ENCODE measurements at regions of chr7 and their contacts with region 1.

Region 1: GRCh38 chr7:16114633-16115032 is 306.7 kb downstream of the CRPPA start:
- DNase-seq: peak in 1 of 2 experiments; percentile 19
- H3K4me3 ChIP-seq: no peak overlapping the region
- H3K4me3 Mint-ChIP-seq: no peak overlapping the region
- H3K27ac Mint-ChIP-seq: peak overlapping the region; percentile 13
- H3K4me1 ChIP-seq: no peaks in the 10 kb centered on the region
- H3K4me1 Mint-ChIP-seq: peaks cover 8% of the 10 kb centered on the region
- H3K27me3 ChIP-seq: no peaks in the 10 kb centered on the region
- H3K27me3 Mint-ChIP-seq: no peaks in the 10 kb centered on the region
- CTCF ChIP-seq: peak; percentile 33 to 39

Region 2: GRCh38 chr7:16078076-16078952 is 36.3 kb before region 1 on chr7:
- CTCF ChIA-PET with region 1: no interaction called
- POLR2A ChIA-PET with region 1: no interaction called
- intact Hi-C with region 1: loop called (anchors 1 kb)
- DNase-seq: peak; percentile 43 to 79
- H3K4me3 ChIP-seq: no peak overlapping the region
- H3K4me3 Mint-ChIP-seq: no peak overlapping the region
- H3K27ac Mint-ChIP-seq: peak overlapping the region; percentile 65
- H3K4me1 ChIP-seq: peaks cover 9% of the 10 kb centered on the region
- H3K4me1 Mint-ChIP-seq: peaks cover 25% of the 10 kb centered on the region
- H3K27me3 ChIP-seq: no peaks in the 10 kb centered on the region
- H3K27me3 Mint-ChIP-seq: no peaks in the 10 kb centered on the region
- CTCF ChIP-seq: peak; percentile 63 to 64

Region 3: DNA sequence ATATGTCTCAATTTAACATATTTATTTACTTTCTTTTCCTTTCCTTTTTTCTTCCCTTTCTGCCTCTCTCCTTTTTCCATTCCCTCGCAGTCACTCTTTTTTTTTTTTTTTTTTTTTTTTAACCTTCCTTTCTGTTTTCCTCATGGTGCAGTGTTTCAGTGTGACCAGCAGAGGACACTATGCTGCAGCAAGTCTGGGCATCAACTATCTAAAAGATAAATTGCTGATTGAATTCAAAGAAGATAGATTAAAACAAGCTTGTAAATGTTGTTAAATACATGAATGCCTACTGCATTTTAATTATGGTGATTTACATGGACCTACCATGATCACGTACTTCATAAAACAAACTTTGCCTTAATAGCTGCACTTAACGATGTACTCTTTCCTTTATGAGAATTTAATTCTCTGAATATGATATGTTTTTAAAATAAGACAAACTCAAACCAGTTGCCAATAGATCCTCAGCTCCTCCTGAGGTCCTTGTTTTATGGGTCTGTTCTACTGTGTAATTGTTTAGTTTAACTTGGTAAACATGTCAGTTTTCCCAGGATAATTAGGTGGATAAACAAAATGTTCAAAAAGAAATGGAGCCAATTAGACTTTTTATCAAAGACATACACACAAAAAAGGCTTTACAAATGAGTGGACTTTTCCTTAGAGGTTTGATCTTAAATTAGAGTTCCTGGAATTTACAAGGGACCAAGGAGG is 868.2 kb after region 1 on chr7:
- CTCF ChIA-PET with region 1: no interaction called
- POLR2A ChIA-PET with region 1: no interaction called
- intact Hi-C with region 1: no loop called
- DNase-seq: peak in 1 of 2 experiments; percentile 38
- H3K4me3 ChIP-seq: no peak overlapping the region
- H3K4me3 Mint-ChIP-seq: no peak overlapping the region
- H3K27ac Mint-ChIP-seq: peak overlapping the region; percentile 65
- H3K4me1 ChIP-seq: no peaks in the 10 kb centered on the region
- H3K4me1 Mint-ChIP-seq: peaks cover 17% of the 10 kb centered on the region
- H3K27me3 ChIP-seq: no peaks in the 10 kb centered on the region
- H3K27me3 Mint-ChIP-seq: no peaks in the 10 kb centered on the region
- CTCF ChIP-seq: peak; percentile 90 to 96